Gastrocnemius medialis (tissue), 4 donors: ENCODE measurements at regions of chr19 and their contacts with region 1.

Region 1: GRCh38 chr19:57362997-57363705 is at the starts of genes TRAPPC2B and ZNF547:
- DNase-seq: peak; percentile 99 to 100
- ATAC-seq: peak; percentile 94
- H3K4me3 ChIP-seq: peak within 1 kb of the TSS; percentile 68 to 93 (median 80)
- H3K27ac ChIP-seq: peak within 1 kb of the TSS; percentile 91 to 98 (median 97)
- H3K4me1 ChIP-seq: peaks cover 16 to 37% of the 10 kb centered on the region in 2 donors
- H3K27me3 ChIP-seq: no peaks in the 10 kb centered on the region
- CTCF ChIP-seq: peak in 1 of 5 experiments; percentile 15
- POLR2A ChIP-seq: peak; percentile 80 to 81
- total RNA-seq, gene TRAPPC2B: 34.4 to 47.4 (median 40.8) TPM
- total RNA-seq, gene ZNF547: 0.58 to 4.4 (median 2.6) TPM

Region 2: GRCh38 chr19:57191141-57192076 is 171.7 kb before region 1 on chr19 and contains the start of gene ZNF264:
- in situ Hi-C with region 1: no loop called
- intact Hi-C with region 1: loop called (anchors 5 kb)
- DNase-seq: peak; percentile 74 to 85
- ATAC-seq: peak; percentile 96 to 97
- H3K4me3 ChIP-seq: peak within 1 kb of the TSS; percentile 92 to 96 (median 94)
- H3K27ac ChIP-seq: peak within 1 kb of the TSS; percentile 84 to 96 (median 85)
- H3K4me1 ChIP-seq: peaks cover 19 to 25% of the 10 kb centered on the region in 2 donors
- H3K27me3 ChIP-seq: peaks cover 0 to 11% (median 0%) of the 10 kb centered on the region in 3 donors
- CTCF ChIP-seq: no peak
- POLR2A ChIP-seq: peak in 1 of 2 donors; percentile 32
- total RNA-seq, gene ZNF264: 11.3 to 21.8 (median 16.9) TPM

Region 3: GRCh38 chr19:57273014-57273413 is 90.1 kb before region 1 on chr19:
- in situ Hi-C with region 1: no loop called
- intact Hi-C with region 1: no loop called
- DNase-seq: no peak
- ATAC-seq: no peak
- H3K4me3 ChIP-seq: no peak overlapping the region
- H3K27ac ChIP-seq: no peak overlapping the region
- H3K4me1 ChIP-seq: no peaks in the 10 kb centered on the region
- H3K27me3 ChIP-seq: no peaks in the 10 kb centered on the region
- CTCF ChIP-seq: no peak
- POLR2A ChIP-seq: no peak

Region 4: DNA sequence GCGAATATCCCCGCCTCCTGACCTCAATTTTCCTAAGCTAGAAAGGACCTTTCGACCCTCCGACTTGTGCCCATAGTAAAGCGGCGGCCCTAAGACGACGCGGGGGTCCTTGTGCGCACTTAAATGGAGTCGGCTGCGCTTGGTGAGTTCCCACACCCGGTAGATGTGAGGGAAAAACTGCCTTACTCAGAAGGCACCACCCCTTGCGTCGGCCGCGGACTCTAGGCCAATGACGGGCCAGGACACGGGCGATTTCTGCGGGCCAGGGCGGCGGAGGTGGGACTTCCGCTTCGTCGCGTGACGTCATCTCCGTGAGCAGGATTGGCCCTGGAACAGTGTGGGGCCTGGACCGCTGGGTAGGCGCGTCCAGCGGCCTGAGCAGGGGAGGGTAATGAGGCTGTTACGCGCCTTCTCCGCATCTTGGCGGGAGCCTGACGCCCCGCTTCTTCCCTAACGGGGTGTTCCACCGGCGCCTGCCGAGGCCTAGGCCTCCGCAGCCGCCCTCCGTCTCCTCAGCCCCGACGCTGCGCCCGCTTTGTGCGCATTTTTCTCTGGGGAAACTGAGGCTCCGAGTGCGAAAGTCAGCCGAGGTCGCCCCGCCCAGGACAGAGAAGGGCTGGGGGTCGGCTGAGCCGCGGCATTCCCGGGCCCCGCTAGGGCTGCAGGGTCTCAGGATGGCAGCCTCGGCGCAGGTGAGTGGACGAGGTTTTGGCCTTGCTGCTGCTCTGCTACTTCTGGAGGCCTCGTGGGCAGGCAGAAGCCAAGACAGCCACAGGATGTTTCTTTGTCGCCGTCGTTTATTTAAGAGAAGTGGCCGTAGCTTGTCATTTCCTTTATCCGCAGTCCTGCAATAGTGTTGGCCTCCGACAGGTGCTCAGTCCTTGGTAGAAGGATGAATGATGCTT is 42.7 kb before region 1 on chr19 and contains the start of gene ZNF543:
- in situ Hi-C with region 1: no loop called
- intact Hi-C with region 1: loop called (anchors 1 kb)
- DNase-seq: peak; percentile 94 to 95
- ATAC-seq: peak; percentile 95 to 96
- H3K4me3 ChIP-seq: peak within 1 kb of the TSS; percentile 65 to 99 (median 91)
- H3K27ac ChIP-seq: peak within 1 kb of the TSS; percentile 87 to 98 (median 91)
- H3K4me1 ChIP-seq: peaks cover 18 to 19% of the 10 kb centered on the region in 2 donors
- H3K27me3 ChIP-seq: no peaks in the 10 kb centered on the region
- CTCF ChIP-seq: no peak
- POLR2A ChIP-seq: peak; percentile 78 to 87
- total RNA-seq, gene ZNF543: 5.8 to 11.5 (median 8.3) TPM

Region 5: DNA sequence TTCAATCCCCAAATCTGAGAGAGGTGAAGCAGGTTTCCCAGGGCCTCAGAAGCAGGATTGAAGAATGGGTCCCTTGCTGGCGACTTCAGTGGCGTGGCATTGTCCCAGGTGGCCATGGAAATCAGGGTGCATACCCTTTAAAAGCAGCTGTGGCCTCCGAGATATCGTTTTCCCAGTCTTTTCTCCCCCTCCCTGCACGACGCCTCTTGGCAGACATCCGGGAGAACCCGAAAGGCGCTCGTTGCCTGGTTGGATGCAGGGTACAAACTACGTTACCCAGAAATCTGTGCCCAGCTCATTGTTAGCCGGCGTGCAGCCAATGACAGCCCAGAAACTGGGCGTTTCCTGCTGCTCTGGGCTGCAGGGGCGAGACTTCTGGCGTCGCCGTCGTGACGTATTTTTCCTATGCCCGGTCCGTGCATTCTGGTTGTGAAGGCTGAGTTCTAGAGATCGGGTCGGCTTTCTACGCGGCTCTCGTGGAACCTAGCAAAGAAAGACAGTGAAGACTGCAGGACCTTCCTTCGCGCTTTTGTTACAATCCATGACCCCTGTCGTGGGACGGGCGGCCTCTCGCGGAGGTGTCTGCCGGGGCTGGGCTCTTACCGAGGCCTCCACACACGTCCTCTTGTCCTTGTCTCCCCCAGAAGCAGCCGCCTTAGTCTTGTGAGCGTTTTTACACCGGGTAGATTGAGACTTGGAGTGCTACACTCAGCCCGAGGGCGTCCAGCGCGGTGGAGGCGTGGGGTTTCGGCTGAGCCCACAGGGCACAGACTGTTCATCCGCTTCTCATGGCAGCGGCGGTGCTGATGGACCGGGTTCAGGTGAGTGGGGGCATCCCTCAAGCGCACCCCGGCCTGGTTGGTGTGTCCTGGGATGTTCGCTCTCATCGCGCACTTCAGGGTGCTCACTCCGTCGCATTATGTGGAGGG is 12.0 kb before region 1 on chr19 and contains the start of gene ZNF304:
- in situ Hi-C with region 1: no loop called
- intact Hi-C with region 1: loop called (anchors 1 kb)
- DNase-seq: peak; percentile 90 to 93
- ATAC-seq: peak; percentile 97 to 98
- H3K4me3 ChIP-seq: peak within 1 kb of the TSS; percentile 77 to 99 (median 93)
- H3K27ac ChIP-seq: peak within 1 kb of the TSS; percentile 78 to 96 (median 92)
- H3K4me1 ChIP-seq: peaks cover 22 to 29% of the 10 kb centered on the region in 2 donors
- H3K27me3 ChIP-seq: no peaks in the 10 kb centered on the region
- CTCF ChIP-seq: no peak
- POLR2A ChIP-seq: peak; percentile 33 to 36
- total RNA-seq, gene ZNF304: 4.1 to 6.5 (median 4.8) TPM

Region 6: GRCh38 chr19:57389730-57390598 is 26.8 kb after region 1 on chr19 and contains the start of gene ZNF548:
- in situ Hi-C with region 1: no loop called
- intact Hi-C with region 1: loop called (anchors 1 kb)
- DNase-seq: peak; percentile 97 to 98
- ATAC-seq: peak; percentile 100
- H3K4me3 ChIP-seq: peak within 1 kb of the TSS; percentile 75 to 85 (median 81)
- H3K27ac ChIP-seq: peak within 1 kb of the TSS; percentile 87 to 98 (median 92)
- H3K4me1 ChIP-seq: peaks cover 22 to 26% of the 10 kb centered on the region in 2 donors
- H3K27me3 ChIP-seq: no peaks in the 10 kb centered on the region
- CTCF ChIP-seq: peak in 4 of 5 experiments; percentile 24 to 41 (median 33)
- POLR2A ChIP-seq: peak; percentile 70 to 78
- total RNA-seq, gene ZNF548: 6.1 to 10.4 (median 8.3) TPM

Region 7: DNA sequence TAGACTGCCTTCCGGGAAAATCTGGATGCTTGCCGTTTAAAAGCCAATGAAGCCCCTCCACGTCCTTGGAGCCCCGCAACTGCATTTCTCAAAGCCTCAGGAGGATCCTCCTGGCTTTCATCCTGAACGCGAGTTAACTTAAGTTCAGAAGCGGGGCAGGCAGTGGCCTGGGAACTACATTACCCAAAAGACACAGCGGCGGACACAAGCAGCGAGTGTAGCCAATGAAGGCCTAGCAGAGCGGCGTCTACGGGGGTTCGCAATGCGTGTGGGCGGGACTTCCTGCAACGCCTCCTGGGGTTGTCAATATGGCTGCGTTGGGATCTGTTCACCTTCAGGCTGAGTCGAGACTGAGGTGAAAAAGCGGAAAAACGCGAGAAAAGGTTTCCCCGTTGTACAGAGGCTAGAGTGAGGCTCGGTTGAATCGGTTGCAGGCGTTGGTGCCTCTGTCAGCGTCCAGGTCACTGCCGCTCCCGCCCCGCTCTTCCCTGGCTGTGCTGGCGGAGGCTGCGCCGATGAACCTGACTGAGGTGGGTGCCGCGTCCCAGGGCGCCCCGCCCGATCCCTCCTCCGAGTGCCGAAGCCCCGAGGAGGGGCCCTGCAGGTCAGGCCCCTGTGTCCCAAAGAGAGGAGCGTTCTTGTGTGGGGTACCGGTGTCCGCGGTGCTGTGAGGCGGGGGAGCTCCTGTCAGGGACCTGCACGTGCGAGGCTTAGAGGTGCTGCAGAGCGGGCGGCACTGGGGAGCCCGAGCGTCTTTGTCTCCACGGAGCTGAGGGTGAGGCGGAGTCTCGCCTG is 47.9 kb after region 1 on chr19 and contains the start of gene ZNF17:
- in situ Hi-C with region 1: no loop called
- intact Hi-C with region 1: loop called (anchors 2 kb)
- DNase-seq: peak; percentile 93 to 95
- ATAC-seq: peak; percentile 99 to 100
- H3K4me3 ChIP-seq: peak within 1 kb of the TSS; percentile 83 to 94 (median 92)
- H3K27ac ChIP-seq: peak within 1 kb of the TSS; percentile 78 to 88 (median 84)
- H3K4me1 ChIP-seq: peaks cover 15 to 21% of the 10 kb centered on the region in 2 donors
- H3K27me3 ChIP-seq: no peaks in the 10 kb centered on the region
- CTCF ChIP-seq: no peak
- POLR2A ChIP-seq: peak; percentile 20 to 47
- total RNA-seq, gene ZNF17: 3.3 to 6.4 (median 5.4) TPM

Region 8: DNA sequence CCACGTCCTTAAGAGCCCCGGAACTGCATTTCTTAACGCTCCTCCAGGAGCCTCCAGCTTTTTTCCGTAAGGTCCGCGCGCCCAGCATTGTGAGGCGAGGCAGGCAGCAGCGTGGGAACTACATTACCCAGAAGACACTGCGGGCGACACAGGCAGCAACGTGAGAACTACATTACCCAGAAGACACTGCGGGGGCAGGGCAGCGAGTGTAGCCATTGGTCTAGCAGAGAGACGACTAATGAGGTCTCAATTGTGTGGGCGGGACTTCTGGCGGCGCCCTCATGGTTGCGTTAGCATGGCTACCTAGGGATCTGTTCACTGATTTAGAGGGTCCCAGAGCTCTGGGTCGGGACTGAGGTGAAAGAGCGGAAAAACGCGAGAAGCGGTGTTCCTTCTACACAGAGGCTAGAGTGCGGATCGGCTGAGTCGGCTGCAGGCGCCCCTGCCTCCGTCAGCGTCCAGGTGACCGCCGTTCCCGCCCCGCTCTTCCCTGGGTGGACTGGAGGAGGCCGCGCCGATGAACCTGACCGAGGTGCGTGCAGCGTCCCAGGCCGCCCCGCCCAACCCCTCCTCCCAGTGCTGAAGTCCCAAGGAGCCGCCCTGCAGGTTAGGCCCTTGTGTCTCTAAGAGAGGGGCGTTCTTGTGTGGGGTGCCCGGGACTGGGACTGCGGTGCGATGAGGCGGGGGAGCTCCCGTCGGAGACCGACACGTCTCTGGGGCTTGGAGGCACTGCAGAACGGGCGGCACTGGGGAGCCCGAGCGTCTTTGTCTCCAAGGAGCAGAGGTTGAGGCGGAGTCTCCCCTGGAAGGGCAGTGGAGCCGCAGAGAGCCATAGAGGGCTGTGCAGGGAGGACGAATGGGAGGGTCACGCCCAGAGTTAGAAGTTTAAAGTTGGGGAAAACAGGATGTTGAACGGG is 72.2 kb after region 1 on chr19 and contains the start of gene ZNF749:
- in situ Hi-C with region 1: no loop called
- intact Hi-C with region 1: loop called (anchors 5 kb)
- DNase-seq: peak; percentile 97 to 99
- ATAC-seq: peak; percentile 100
- H3K4me3 ChIP-seq: peak within 1 kb of the TSS; percentile 87 to 94 (median 90)
- H3K27ac ChIP-seq: peak within 1 kb of the TSS; percentile 70 to 79 (median 75)
- H3K4me1 ChIP-seq: peaks cover 14 to 17% of the 10 kb centered on the region in 2 donors
- H3K27me3 ChIP-seq: no peaks in the 10 kb centered on the region
- CTCF ChIP-seq: no peak
- POLR2A ChIP-seq: no peak
- total RNA-seq, gene ZNF749: 3.1 to 11.4 (median 3.9) TPM